Activated CD8-positive, alpha-beta T cell treated with anti-CD3 and anti-CD28 coated beads for 36 hours (primary cell): ENCODE measurements at regions of chr6 and their contacts with region 1.

Region 1: DNA sequence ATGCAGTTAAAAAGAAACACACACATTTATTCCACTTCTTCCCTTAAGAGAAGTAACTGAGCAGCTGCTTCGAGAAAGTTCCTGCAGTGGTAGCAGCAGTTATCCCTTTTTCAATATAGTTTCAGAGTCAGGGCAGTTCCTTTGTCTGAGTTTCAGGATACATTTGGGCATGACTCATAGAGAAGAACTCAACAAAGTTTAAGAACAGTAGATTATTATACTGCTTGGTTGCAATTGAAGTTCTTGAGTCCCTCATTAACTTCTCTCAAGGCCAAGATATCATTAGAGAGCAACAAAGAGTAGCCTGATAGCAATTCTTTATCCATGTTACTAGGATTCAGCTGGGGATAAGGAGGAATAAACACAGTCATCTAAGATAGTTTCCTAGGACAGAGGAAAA is 54.4 kb downstream of the TPD52L1 start:
- DNase-seq: no peak
- ATAC-seq: no peak
- H3K4me3 Mint-ChIP-seq: no peak overlapping the region
- H3K27ac Mint-ChIP-seq: no peak overlapping the region
- H3K4me1 Mint-ChIP-seq: no peaks in the 10 kb centered on the region
- H3K27me3 Mint-ChIP-seq: peaks cover 7% of the 10 kb centered on the region
- CTCF ChIP-seq: no peak

Region 2: GRCh38 chr6:125217992-125218391 is 10.0 kb after region 1 on chr6:
- CTCF ChIA-PET with region 1: no interaction called
- POLR2A ChIA-PET with region 1: no interaction called
- intact Hi-C with region 1: loop called (anchors 1 kb)
- DNase-seq: no peak
- ATAC-seq: no peak
- H3K4me3 Mint-ChIP-seq: no peak overlapping the region
- H3K27ac Mint-ChIP-seq: no peak overlapping the region
- H3K4me1 Mint-ChIP-seq: no peaks in the 10 kb centered on the region
- H3K27me3 Mint-ChIP-seq: peaks cover 1% of the 10 kb centered on the region
- CTCF ChIP-seq: no peak